ENCODE measurements at regions of chrX and their contacts with region 1.

Region 1: DNA sequence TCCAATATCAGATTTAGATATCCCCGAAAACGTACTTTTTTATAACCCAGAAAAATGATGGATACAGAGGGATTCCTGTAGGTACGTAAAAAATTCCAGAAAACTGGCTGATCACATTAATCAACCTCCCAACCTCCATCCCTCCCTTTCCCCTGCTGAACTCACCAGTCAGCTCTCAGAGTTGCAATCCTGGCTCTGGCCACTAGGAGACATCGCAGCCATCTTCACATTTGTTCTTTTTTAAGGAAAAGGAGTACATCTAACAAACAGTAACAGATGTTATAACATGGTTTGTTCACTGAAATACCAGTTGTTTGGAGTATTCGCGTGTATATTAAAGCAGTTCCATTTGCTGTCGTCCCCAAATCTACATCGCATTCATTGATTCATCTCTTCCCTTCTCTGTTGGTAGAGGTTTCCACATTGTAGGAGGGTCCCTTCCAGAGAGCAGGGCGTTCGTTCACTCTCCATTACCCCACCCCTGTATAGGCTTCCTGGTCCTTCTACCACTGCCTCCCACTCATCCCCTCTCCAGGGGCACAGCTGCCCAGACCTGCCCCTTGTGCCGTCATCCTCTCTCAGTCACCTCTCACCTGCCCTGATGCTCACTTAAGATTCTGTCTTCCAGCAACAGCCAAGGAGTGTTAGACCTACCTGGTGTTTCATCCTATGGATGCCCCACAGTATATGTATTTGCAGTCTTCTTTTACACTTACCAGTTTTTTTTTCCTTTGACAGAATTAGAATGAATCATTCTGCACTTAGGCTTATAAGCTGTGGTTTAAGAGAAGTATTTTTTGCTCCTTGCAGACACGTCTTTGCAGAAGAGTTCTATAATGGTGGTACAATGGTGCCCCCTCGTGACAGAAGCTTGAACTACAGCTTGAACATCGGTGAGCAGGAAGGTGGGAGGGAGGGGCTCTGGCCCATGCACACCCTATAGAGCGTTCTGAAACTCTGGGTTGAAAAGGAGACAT is 36.8 kb upstream of the RAB40AL start:
- DNase-seq: peak; percentile 86
- ATAC-seq: peak; percentile 85
- H3K4me3 Mint-ChIP-seq: no peak overlapping the region
- H3K27ac Mint-ChIP-seq: no peak overlapping the region
- H3K4me1 Mint-ChIP-seq: peaks cover 8% of the 10 kb centered on the region
- H3K27me3 Mint-ChIP-seq: no peaks in the 10 kb centered on the region
- CTCF ChIP-seq: peak; percentile 45

Region 2: DNA sequence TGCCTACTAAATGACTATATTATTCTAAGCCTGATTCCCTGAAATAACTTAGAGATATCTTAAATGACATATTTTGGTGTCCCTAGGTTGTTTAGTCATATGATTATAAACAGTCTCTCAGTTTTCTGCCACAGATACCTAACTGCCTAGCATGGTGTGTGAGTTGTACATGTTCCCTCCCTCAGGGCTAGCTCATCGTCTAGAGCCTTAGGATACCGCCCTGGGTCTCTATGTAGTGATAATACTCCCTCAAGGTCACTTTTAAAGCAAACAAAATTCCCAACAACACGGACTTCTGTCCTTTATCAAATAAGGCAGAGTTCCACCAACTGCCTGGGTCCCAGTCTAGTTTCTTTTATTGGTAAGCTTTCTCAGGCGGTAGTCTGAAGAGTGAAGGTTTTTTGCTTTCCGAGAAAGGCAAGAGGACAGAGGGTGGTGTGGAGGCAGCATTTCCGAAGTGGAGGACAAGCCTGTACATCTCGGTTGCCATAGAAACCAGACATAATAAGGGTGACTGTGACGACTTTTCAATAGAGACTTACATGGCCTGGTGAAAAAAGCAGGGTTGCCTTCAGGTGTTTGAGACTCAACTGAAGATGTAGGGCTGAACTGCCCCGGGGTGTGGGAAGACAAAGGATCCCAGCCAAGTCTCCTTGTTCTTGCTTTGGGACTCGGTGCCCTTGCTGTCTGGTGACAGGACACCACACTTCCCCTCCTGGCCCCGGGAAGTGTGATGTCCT is 16.9 kb before region 1 on chrX:
- CTCF ChIA-PET with region 1: interaction called, 10 read pairs
- POLR2A ChIA-PET with region 1: no interaction called
- intact Hi-C with region 1: no loop called
- DNase-seq: no peak
- ATAC-seq: no peak
- H3K4me3 Mint-ChIP-seq: no peak overlapping the region
- H3K27ac Mint-ChIP-seq: no peak overlapping the region
- H3K4me1 Mint-ChIP-seq: no peaks in the 10 kb centered on the region
- H3K27me3 Mint-ChIP-seq: no peaks in the 10 kb centered on the region
- CTCF ChIP-seq: no peak

Measured in activated CD8-positive, alpha-beta T cell treated with anti-CD3 and anti-CD28 coated beads for 36 hours (primary cell).